PC-9 (cell line): ENCODE measurements at regions of chr22 and their contacts with region 1.

Region 1: GRCh38 chr22:20402960-20403778 is 9.2 kb downstream of the ZNF74 start:
- DNase-seq: no peak
- H3K4me3 ChIP-seq: no peak overlapping the region
- H3K27ac ChIP-seq: no peak overlapping the region
- H3K4me1 ChIP-seq: no peaks in the 10 kb centered on the region
- H3K27me3 ChIP-seq: no peaks in the 10 kb centered on the region
- CTCF ChIP-seq: no peak

Region 2: GRCh38 chr22:19295733-19296132 is 1107.4 kb before region 1 on chr22:
- CTCF ChIA-PET with region 1: no interaction called
- POLR2A ChIA-PET with region 1: no interaction called
- intact Hi-C with region 1: no loop called
- DNase-seq: no peak
- H3K4me3 ChIP-seq: no peak overlapping the region
- H3K27ac ChIP-seq: no peak overlapping the region
- H3K4me1 ChIP-seq: no peaks in the 10 kb centered on the region
- H3K27me3 ChIP-seq: no peaks in the 10 kb centered on the region
- CTCF ChIP-seq: no peak

Region 3: DNA sequence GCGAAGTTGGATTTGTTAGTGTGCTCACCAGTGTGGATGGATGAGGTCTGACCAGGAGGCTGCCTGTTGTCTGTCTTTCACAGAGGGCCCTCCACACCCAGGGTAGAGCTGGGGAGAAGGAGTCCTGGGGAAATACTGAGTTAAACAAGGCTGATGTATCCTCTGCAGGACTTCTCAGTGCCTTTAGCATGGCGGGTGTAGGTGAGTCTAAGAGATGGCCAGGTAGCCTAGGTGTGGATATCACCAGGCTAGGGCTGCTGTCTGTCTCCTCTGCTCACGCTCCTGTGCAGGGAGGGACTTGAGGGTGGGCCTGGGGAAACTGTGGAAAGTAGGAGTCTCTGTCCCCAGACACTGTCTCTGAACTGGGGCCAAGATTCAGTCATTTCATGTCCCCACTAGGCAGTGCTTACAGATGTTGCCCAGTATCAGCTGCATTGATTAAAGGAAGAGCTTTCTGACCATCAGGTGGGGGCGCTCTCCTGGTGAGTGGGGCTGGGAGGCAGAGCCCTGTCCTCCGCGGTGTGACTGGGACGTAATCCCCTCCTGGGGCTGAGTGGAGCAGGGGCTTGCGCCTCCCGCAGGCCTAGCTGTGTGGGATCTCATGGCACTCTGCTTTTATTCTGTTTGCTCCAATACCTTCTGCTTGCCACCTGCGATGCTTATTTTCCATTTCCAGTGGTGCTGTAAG is 216.8 kb before region 1 on chr22:
- CTCF ChIA-PET with region 1: no interaction called
- POLR2A ChIA-PET with region 1: no interaction called
- intact Hi-C with region 1: no loop called
- DNase-seq: no peak
- H3K4me3 ChIP-seq: no peak overlapping the region
- H3K27ac ChIP-seq: no peak overlapping the region
- H3K4me1 ChIP-seq: no peaks in the 10 kb centered on the region
- H3K27me3 ChIP-seq: peaks cover 9% of the 10 kb centered on the region; the same call in 1 of the 2 replicates
- CTCF ChIP-seq: no peak

Region 4: GRCh38 chr22:20517422-20517821 is 114.3 kb after region 1 on chr22:
- CTCF ChIA-PET with region 1: no interaction called
- POLR2A ChIA-PET with region 1: interaction called, 40 read pairs
- intact Hi-C with region 1: no loop called
- DNase-seq: no peak
- H3K4me3 ChIP-seq: no peak overlapping the region
- H3K27ac ChIP-seq: no peak overlapping the region
- H3K4me1 ChIP-seq: no peaks in the 10 kb centered on the region
- H3K27me3 ChIP-seq: no peaks in the 10 kb centered on the region
- CTCF ChIP-seq: no peak